ENCODE measurements at regions of chr17 and their contacts with region 1.

Region 1: DNA sequence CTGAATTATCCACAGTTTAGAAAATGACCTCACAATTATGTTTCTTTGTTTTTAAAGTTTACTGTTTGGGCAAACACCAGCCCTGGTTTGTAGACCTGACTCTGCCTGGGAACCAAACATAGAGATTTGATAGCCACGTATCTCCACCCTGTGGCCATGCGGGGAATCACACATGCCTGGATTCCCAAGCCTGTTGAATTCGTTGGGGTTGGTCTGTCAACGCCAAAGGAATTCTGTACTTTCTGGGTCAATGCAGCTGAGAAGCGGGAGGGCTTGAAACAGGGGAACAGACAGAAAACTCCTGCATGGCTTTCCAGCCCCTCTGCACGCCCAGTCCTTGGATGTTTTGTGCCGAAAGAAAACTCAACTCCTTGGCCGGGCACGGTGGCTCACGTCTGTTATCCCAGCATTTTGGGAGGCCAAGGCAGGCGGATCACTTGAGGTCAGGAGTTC is 27.0 kb downstream of the CD300A start:
- DNase-seq: peak; percentile 79
- H3K4me3 Mint-ChIP-seq: no peak overlapping the region
- H3K27ac Mint-ChIP-seq: no peak overlapping the region
- H3K4me1 Mint-ChIP-seq: no peaks in the 10 kb centered on the region
- H3K27me3 Mint-ChIP-seq: peaks cover 2% of the 10 kb centered on the region

Region 2: DNA sequence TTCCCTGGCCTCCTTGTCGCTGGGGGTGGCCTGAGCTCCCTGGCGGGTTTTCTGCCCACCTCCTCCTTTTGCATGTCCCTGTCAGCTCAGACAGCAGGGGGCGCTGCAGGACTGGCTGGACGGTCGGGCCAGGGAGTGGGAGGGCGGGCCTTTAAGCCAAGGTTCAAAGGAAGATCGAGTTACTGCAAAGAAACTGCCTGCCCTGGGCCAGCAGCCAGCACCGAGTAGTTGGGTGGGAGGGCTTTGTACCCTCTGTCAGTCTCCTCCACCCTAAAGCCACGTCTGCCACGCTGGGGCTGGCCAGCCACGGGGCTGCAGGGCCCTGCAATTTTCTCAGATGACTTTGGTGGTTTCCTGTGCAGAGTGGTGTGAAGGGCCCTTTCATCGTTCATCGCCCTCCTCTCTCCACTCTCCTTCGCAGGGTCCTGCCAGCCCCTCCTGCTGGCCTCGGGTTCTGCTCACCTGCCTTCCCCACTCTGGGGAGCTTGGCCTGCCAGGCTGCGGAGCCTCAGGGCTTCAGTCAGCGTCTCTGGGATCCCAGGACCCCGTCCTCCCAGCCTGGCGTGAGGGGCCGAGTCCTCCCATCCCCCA is 113.8 kb before region 1 on chr17:
- CTCF ChIA-PET with region 1: interaction called, 20 read pairs
- intact Hi-C with region 1: loop called (anchors 1 kb)
- DNase-seq: peak; percentile 96
- H3K4me3 Mint-ChIP-seq: no peak overlapping the region
- H3K27ac Mint-ChIP-seq: no peak overlapping the region
- H3K4me1 Mint-ChIP-seq: no peaks in the 10 kb centered on the region
- H3K27me3 Mint-ChIP-seq: no peaks in the 10 kb centered on the region

Region 3: GRCh38 chr17:74467221-74467951 is 26.0 kb before region 1 on chr17:
- CTCF ChIA-PET with region 1: interaction called, 10 read pairs
- intact Hi-C with region 1: no loop called
- DNase-seq: no peak
- H3K4me3 Mint-ChIP-seq: no peak overlapping the region
- H3K27ac Mint-ChIP-seq: peak overlapping the region; percentile 7
- H3K4me1 Mint-ChIP-seq: peaks cover 25% of the 10 kb centered on the region
- H3K27me3 Mint-ChIP-seq: no peaks in the 10 kb centered on the region

Region 4: GRCh38 chr17:74601944-74602572 is 108.7 kb after region 1 on chr17:
- CTCF ChIA-PET with region 1: no interaction called
- intact Hi-C with region 1: loop called (anchors 5 kb)
- DNase-seq: peak; percentile 74
- H3K4me3 Mint-ChIP-seq: no peak overlapping the region
- H3K27ac Mint-ChIP-seq: no peak overlapping the region
- H3K4me1 Mint-ChIP-seq: peaks cover 20% of the 10 kb centered on the region
- H3K27me3 Mint-ChIP-seq: peaks cover 4% of the 10 kb centered on the region

Measured in activated naive CD4-positive, alpha-beta T cell treated with anti-CD3 and anti-CD28 coated beads for 36 hours (primary cell).